Activated T-helper 2 cell treated with anti-CD3 and anti-CD28 coated beads, Interferon-gamma antibody, Interleukin-2, Interleukin-4, amounts not matched to agents 10 μg/mL and 5 μg/mL and 100 μg/mL, durations not matched to agents 14 hours and 24 hours and 36 hours (primary cell): ENCODE measurements at regions of chr16 and their contacts with region 1.

Region 1: DNA sequence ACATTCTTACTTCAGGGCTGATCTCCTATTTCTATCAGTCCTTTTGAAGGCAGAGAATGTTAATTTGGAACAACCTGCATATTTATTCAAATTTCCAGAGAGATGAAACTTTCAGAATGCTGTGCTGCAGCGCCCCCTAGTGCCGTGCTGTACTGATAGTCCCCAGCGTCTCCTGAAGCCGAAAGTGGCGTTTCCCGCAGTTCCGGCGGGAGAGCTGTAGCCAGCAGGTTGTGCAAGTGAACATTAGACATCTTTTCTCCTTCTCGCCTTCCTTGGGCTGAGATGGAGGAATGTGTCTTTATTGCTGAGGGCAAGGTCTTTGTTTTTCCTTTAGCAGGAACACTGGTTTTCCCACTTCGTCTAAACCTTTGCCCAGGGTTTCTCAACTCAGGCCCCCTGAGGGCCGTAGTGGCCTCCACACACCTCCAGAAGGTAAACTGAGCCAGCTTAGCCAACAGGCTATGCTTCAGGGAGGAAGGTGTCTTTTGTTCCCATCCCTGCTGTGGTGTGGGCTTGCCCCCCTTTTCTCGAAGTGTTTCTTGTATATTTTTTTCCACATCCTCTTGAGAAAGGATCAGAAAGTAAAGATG is 26.4 kb downstream of the USP10 start:
- DNase-seq: peak; percentile 65
- H3K4me3 Mint-ChIP-seq: no peak overlapping the region
- H3K27ac Mint-ChIP-seq: no peak overlapping the region
- H3K4me1 Mint-ChIP-seq: peaks cover 53% of the 10 kb centered on the region
- H3K27me3 Mint-ChIP-seq: no peaks in the 10 kb centered on the region

Region 2: DNA sequence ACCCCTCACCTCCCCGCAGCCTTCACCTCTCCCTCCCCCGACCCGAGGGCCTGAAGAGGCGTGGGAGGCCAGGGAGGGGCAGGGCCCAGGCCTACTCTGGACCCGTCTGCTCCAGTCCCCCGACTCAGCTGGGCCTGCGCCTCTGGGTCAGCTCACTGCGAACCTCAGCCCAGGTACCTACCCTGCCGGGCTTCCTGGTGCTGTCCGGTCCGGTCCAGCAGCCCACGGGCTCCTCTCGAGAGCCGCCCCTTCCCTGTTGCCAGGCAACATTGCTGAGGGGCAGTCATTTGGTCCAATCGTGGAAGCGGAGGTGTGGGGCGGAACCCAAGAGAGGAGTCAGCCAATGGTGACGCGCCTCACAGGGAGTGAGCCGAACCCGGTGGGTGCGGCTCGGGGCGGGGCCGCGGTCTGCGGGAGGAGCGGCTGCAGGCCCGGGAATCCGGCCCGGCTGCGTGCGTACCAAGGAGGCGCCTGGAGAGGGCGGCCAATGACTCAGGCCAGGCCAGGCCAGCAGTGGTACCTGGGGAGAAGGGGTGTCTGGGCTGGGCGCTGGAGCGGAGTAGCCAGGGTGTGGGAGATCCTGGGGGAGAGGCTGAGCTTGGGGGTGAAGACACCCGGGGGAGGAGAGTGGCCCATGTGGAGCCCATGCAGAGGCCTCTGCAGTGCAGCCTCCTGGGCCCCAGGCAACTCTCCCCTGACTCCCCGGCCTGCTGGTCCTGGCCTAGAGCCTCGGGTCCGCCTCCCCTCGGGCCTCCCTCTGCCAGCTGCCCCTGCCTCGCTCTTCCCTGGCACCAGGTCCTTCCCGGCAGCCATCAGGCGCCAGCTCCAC is 221.5 kb before region 1 on chr16 and contains the start of gene MEAK7:
- intact Hi-C with region 1: loop called (anchors 5 kb)
- DNase-seq: peak; percentile 96
- H3K4me3 Mint-ChIP-seq: peak within 1 kb of the TSS; percentile 88
- H3K27ac Mint-ChIP-seq: peak within 1 kb of the TSS; percentile 89
- H3K4me1 Mint-ChIP-seq: peaks cover 44% of the 10 kb centered on the region
- H3K27me3 Mint-ChIP-seq: no peaks in the 10 kb centered on the region
- total RNA-seq, gene MEAK7: 15.4 and 19.4 TPM in 2 replicates

Region 3: GRCh38 chr16:84672276-84673202 is 53.6 kb before region 1 on chr16:
- intact Hi-C with region 1: loop called (anchors 1 kb)
- DNase-seq: peak; percentile 66
- H3K4me3 Mint-ChIP-seq: no peak overlapping the region
- H3K27ac Mint-ChIP-seq: no peak overlapping the region
- H3K4me1 Mint-ChIP-seq: peaks cover 7% of the 10 kb centered on the region
- H3K27me3 Mint-ChIP-seq: peaks cover 8% of the 10 kb centered on the region

Region 4: GRCh38 chr16:84699712-84700445 is 26.3 kb before region 1 on chr16 and contains the start of gene USP10:
- intact Hi-C with region 1: loop called (anchors 2 kb)
- DNase-seq: peak; percentile 81
- H3K4me3 Mint-ChIP-seq: peak within 1 kb of the TSS; percentile 94
- H3K27ac Mint-ChIP-seq: peak within 1 kb of the TSS; percentile 96
- H3K4me1 Mint-ChIP-seq: peaks cover 32% of the 10 kb centered on the region
- H3K27me3 Mint-ChIP-seq: peaks cover 3% of the 10 kb centered on the region
- total RNA-seq, gene USP10: 151 and 170 TPM in 2 replicates

Region 5: GRCh38 chr16:84879569-84880487 is 153.7 kb after region 1 on chr16:
- intact Hi-C with region 1: no loop called
- DNase-seq: no peak
- H3K4me3 Mint-ChIP-seq: no peak overlapping the region
- H3K27ac Mint-ChIP-seq: no peak overlapping the region
- H3K4me1 Mint-ChIP-seq: peaks cover 5% of the 10 kb centered on the region
- H3K27me3 Mint-ChIP-seq: peaks cover 3% of the 10 kb centered on the region